ENCODE measurements at regions of chr4 and their contacts with region 1.

Region 1: DNA sequence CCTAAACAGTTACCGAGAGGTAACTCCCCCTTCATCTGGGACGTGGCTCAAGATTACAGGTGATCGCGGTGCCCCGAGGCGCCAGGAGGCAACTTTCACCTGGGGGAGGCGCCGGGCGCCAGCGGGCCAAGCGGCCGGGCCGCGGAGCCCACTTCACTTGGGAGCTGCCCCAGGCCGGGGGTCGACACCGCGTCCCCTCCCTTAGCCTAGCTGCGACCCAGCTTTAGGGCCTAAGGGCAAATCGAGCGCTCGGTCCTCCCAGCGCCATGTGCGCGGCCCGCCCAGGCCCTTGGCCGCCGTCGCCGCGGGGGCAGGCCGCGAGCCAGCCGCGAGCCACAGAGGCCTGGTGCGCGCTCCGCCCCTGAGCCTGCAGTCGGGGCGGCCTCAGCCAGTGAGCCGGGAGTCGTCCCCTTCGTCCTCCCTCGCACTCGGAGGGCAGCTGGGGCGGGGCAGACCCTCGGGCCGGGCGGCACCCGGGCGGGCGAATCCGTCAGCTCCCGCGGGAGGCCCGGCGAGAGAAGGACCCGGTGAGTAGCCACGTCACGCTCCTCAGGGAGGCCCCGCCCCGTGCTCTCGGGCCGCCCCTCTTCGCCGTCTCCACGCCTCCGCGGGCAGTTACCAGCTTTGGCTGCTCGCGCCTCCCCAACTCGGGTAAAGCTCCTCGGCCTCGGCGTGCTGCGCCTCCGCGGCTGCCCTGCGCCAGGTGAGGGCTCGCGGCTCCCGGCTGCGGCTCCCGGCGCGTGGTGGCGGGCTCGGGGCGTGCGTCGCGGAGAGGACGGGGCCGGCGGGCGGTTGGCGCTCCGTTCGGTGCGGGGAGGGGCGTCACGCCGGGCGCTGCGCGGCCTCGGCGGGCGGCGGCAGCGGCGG is at the start of gene LARP1B:
- DNase-seq: peak; percentile 95
- H3K4me3 Mint-ChIP-seq: peak within 1 kb of the TSS; percentile 84
- H3K27ac Mint-ChIP-seq: peak within 1 kb of the TSS; percentile 86
- H3K4me1 Mint-ChIP-seq: no peaks in the 10 kb centered on the region
- H3K27me3 Mint-ChIP-seq: no peaks in the 10 kb centered on the region
- CTCF ChIP-seq: no peak
- total RNA-seq, gene LARP1B: 17.4 and 19.7 TPM in 2 replicates

Region 2: DNA sequence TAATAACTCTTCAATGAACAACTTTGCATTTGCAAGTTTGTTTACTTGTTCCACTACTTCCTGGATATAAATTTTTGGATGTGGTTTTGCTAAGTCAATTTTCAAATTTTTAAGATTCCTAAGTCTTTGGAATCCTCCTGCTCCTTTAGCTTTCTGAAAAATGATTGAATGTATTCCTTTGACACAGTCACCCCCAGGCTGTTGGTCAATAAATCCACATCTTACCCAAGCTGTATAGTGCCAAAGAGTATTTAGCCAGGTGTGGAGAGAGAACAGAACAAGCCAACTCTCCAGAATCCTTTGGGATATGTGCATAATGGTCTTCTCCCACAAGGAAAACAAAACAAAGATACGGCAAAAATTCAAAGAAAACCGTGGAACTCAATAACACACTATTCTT is 485.0 kb before region 1 on chr4:
- CTCF ChIA-PET with region 1: no interaction called
- intact Hi-C with region 1: no loop called
- DNase-seq: no peak
- H3K4me3 Mint-ChIP-seq: no peak overlapping the region
- H3K27ac Mint-ChIP-seq: no peak overlapping the region
- H3K4me1 Mint-ChIP-seq: no peaks in the 10 kb centered on the region
- H3K27me3 Mint-ChIP-seq: no peaks in the 10 kb centered on the region
- CTCF ChIP-seq: no peak

Region 3: DNA sequence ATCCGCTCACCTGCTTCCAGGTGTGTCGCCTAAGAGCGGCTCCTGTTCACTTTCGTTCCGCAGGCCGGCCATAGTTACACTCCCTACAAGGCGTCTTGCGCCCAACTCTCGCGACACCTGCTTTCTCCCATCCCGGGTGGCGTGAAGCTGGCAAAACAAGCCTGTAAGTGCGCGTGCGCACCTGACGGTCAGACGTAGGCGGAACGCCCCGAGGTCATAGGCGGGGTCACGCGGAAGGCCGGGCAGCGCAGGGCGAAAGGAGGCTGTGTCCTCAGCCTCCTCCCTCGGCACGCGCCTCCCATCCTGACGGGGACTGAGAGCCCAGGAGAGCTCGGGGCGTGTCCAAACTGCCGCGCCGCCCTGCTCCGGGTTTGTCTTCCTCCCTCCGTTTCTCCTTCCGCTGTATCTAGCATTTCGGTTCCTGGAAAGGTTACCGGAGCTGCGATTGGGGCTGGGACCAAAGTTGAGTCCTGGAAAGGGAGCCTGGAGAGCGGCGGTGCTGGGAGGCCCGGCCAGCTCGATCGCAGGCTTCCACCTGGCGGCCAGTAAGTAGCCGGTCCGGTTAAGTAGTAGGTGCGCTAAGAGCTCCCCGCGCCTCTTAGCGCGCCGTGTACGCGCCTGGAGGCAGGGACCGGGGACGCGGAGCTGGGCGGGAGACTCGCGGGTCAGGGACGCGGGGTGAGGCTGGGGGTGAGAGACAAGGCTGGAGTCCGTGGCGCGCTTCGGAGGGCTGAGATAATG is 95.7 kb before region 1 on chr4 and contains the starts of genes ABHD18 and MFSD8:
- CTCF ChIA-PET with region 1: interaction called, 3 read pairs
- intact Hi-C with region 1: loop called (anchors 10 kb)
- DNase-seq: peak; percentile 97
- H3K4me3 Mint-ChIP-seq: peak within 1 kb of the TSS; percentile 95
- H3K27ac Mint-ChIP-seq: peak within 1 kb of the TSS; percentile 95
- H3K4me1 Mint-ChIP-seq: no peaks in the 10 kb centered on the region
- H3K27me3 Mint-ChIP-seq: no peaks in the 10 kb centered on the region
- CTCF ChIP-seq: no peak
- total RNA-seq, gene ABHD18: 7.3 and 8.5 TPM in 2 replicates
- total RNA-seq, gene MFSD8: 17.1 and 25.4 TPM in 2 replicates

Region 4: GRCh38 chr4:128427832-128428366 is 367.0 kb after region 1 on chr4:
- CTCF ChIA-PET with region 1: no interaction called
- intact Hi-C with region 1: no loop called
- DNase-seq: peak; percentile 65
- H3K4me3 Mint-ChIP-seq: peak overlapping the region; percentile 11
- H3K27ac Mint-ChIP-seq: no peak overlapping the region
- H3K4me1 Mint-ChIP-seq: peaks cover 17% of the 10 kb centered on the region
- H3K27me3 Mint-ChIP-seq: no peaks in the 10 kb centered on the region
- CTCF ChIP-seq: peak; percentile 36